ENCODE measurements at regions of chr6 and their contacts with region 1.

Region 1: DNA sequence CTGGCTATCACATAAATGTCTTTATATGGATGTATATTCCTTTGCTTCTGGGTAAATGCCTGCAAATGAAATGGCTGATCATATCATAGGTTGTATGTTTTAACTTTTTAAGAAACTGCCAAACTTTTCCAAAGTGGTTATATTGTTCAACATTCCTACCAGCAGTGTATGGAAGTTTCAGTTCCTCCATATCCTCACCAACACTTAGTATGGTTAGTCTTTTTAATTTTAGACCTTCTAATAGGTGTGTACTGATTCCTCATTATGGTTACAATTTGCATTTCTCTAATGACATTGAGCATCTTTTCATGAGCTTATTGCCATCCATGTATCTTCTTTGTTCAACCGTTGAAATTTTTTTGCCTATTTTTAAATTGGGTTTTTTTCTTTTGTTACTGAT is 155.4 kb downstream of the ZFAND3 start:
- DNase-seq: no peak
- ATAC-seq: no peak
- H3K4me3 ChIP-seq: no peak overlapping the region
- H3K4me3 Mint-ChIP-seq: no peak overlapping the region
- H3K27ac ChIP-seq: no peak overlapping the region
- H3K27ac Mint-ChIP-seq: no peak overlapping the region
- H3K4me1 ChIP-seq: peaks cover 26% of the 10 kb centered on the region
- H3K4me1 Mint-ChIP-seq: peaks cover 63% of the 10 kb centered on the region
- H3K27me3 ChIP-seq: no peaks in the 10 kb centered on the region
- H3K27me3 Mint-ChIP-seq: no peaks in the 10 kb centered on the region
- CTCF ChIP-seq: no peak

Region 2: GRCh38 chr6:37745748-37746147 is 229.2 kb before region 1 on chr6:
- CTCF ChIA-PET with region 1: no interaction called
- POLR2A ChIA-PET with region 1: no interaction called
- intact Hi-C with region 1: no loop called
- DNase-seq: no peak
- ATAC-seq: no peak
- H3K4me3 ChIP-seq: no peak overlapping the region
- H3K4me3 Mint-ChIP-seq: no peak overlapping the region
- H3K27ac ChIP-seq: no peak overlapping the region
- H3K27ac Mint-ChIP-seq: no peak overlapping the region
- H3K4me1 ChIP-seq: no peaks in the 10 kb centered on the region
- H3K4me1 Mint-ChIP-seq: no peaks in the 10 kb centered on the region
- H3K27me3 ChIP-seq: no peaks in the 10 kb centered on the region
- H3K27me3 Mint-ChIP-seq: peaks cover 10% of the 10 kb centered on the region
- CTCF ChIP-seq: no peak

Region 3: DNA sequence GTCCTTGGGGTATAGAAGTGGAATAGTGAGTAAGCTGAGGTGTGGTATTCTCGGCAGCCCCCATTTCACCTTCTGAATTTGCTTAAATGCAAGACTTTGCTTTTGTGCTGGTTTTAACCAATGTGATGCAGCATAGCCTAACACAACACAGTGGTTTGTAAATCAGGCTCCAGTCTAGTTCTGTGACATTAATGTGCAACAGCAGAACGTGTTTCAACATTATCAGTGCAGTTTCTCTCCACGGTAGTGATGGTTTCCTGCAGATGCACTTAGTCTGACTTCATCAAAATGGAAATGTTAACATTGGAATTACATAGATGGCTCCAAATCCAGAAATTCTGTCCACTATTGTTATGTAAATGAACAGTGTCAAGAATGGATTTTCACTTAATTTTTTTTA is 15.9 kb before region 1 on chr6:
- CTCF ChIA-PET with region 1: no interaction called
- POLR2A ChIA-PET with region 1: interaction called, 4 read pairs
- intact Hi-C with region 1: loop called in 1 of 2 experiments (anchors 2 kb)
- DNase-seq: no peak
- ATAC-seq: no peak
- H3K4me3 ChIP-seq: no peak overlapping the region
- H3K4me3 Mint-ChIP-seq: no peak overlapping the region
- H3K27ac ChIP-seq: no peak overlapping the region
- H3K27ac Mint-ChIP-seq: no peak overlapping the region
- H3K4me1 ChIP-seq: peaks cover 35% of the 10 kb centered on the region
- H3K4me1 Mint-ChIP-seq: peaks cover 48% of the 10 kb centered on the region
- H3K27me3 ChIP-seq: no peaks in the 10 kb centered on the region
- H3K27me3 Mint-ChIP-seq: no peaks in the 10 kb centered on the region
- CTCF ChIP-seq: no peak